OCI-LY7 (cell line): ENCODE measurements at regions of chr5 and their contacts with region 1.

Region 1: DNA sequence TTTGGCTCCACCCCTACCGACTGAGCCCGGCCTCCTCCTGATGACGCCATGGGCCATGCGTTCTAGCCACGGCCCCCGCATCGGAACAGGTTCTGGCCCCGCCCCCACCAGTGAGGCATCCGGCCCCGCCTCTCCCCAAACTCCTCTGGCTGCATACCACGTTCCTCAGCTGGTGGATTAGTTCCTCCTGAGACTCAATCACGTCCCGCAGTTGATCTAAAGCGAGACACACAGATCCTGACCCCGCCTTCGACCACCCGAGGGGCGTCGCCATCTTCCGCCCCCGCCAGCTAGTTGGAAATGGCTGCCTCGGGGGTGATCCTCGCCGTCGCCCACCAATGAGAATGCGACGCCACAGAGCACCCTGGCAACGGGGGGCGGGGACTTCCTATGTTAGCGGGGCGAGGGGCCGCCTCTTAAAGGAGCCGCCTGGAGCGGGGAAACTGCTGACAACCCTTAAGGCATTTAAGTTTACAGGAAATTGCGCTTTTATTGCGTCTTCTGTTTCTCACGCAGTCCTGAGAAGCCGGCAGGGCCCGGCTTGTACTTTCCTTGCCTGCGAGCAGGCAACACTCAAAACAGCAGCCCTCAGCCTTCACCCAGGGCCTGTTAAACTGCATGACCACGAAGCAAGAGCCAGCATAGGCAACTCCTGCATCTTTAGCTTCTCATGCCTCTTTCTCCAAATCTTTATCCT is at the start of gene SPATA24:
- DNase-seq: peak; percentile 98
- H3K4me3 ChIP-seq: peak within 1 kb of the TSS; percentile 71
- H3K27ac ChIP-seq: peak within 1 kb of the TSS; percentile 83
- H3K4me1 ChIP-seq: peaks cover 43% of the 10 kb centered on the region
- CTCF ChIP-seq: no peak
- total RNA-seq, gene SPATA24: 12.0 and 12.4 TPM in 2 replicates

Region 2: GRCh38 chr5:139197710-139198669 is 205.9 kb before region 1 on chr5 and contains the start of gene SIL1:
- CTCF ChIA-PET with region 1: no interaction called
- POLR2A ChIA-PET with region 1: interaction called, 3 read pairs
- intact Hi-C with region 1: loop called (anchors 10 kb)
- DNase-seq: peak; percentile 96
- H3K4me3 ChIP-seq: peak within 1 kb of the TSS; percentile 95
- H3K27ac ChIP-seq: peak within 1 kb of the TSS; percentile 43
- H3K4me1 ChIP-seq: peaks cover 20% of the 10 kb centered on the region
- CTCF ChIP-seq: no peak
- total RNA-seq, gene SIL1: 9.2 and 11.4 TPM in 2 replicates

Region 3: GRCh38 chr5:139301808-139302499 is 102.0 kb before region 1 on chr5:
- CTCF ChIA-PET with region 1: no interaction called
- POLR2A ChIA-PET with region 1: no interaction called
- intact Hi-C with region 1: no loop called
- DNase-seq: no peak
- H3K4me3 ChIP-seq: no peak overlapping the region
- H3K27ac ChIP-seq: no peak overlapping the region
- H3K4me1 ChIP-seq: peaks cover 94% of the 10 kb centered on the region
- CTCF ChIP-seq: no peak